Transverse colon (tissue), 4 donors: ENCODE measurements at regions of chr20 and their contacts with region 1.

Region 1: GRCh38 chr20:15889514-15890256 is 683.6 kb downstream of the KIF16B start:
- DNase-seq: no peak
- H3K4me3 ChIP-seq: no peak overlapping the region
- H3K27ac ChIP-seq: no peak overlapping the region
- H3K4me1 ChIP-seq: no peaks in the 10 kb centered on the region
- H3K27me3 ChIP-seq: no peaks in the 10 kb centered on the region
- CTCF ChIP-seq: no peak
- EP300 ChIP-seq: no peak
- POLR2A ChIP-seq: no peak

Region 2: DNA sequence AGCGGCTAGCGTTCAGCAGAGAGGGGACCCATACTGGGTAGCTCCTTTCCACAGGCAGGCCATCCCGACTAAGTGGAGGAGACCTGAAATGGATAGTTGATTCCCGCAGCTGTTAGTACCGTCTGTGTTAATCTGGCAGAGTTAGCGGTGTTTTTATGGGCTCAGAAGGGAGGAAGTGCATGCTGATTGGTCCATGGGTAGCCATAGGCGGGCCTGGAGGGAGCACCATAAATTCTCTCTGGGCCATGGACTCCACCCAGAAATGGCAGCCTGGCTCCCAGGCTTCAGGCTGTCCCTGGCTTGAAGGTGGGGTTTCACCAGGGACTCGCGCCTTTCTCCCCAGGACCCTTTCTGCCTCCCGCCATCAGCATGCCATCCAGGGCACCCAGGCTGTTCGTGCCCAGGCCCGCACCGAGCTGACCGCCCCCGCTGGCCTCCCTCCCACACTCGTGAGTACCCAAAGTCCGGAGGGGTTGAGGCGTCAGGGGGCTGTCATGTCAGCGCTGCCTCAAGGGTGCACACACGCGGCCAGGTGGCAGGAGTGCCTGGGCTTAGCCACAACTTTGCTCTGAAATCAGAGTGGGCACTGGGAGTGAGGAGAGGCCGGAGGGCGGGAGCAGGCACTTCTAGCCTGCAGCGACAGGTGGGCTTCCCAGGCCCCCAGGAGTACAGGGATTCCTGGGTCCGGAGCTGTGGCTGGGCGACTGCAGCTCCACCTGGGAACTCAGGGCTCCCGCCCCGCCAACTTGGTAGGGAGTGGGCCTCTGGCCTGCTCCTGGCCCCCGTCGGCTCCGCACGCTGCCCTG is 857.9 kb before region 1 on chr20:
- in situ Hi-C with region 1: no loop called
- intact Hi-C with region 1: loop called (anchors 5 kb)
- DNase-seq: no peak
- H3K4me3 ChIP-seq: no peak overlapping the region
- H3K27ac ChIP-seq: no peak overlapping the region
- H3K4me1 ChIP-seq: no peaks in the 10 kb centered on the region
- H3K27me3 ChIP-seq: no peaks in the 10 kb centered on the region
- CTCF ChIP-seq: no peak
- EP300 ChIP-seq: no peak
- POLR2A ChIP-seq: no peak